Transverse colon (tissue), 4 donors: ENCODE measurements at regions of chr4 and their contacts with region 1.

Region 1: DNA sequence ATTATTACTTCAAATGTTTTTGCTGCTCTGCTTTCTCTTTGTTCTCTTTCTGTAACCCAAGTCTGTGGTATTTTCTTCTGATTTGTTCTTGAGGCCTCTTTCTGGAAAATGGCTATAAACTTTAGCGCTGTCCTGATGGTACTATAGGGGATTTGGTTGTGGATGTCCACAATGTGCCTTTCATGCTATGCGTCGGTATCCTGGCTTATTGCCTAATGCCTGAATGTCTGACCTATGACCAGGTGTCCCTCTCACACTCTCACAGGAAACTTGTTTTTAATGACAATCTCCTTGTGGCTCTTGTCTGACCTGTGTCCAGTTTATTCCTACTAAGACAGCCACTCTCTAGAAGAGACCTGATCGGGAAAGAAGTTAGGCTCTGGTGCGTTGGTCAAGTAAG is 222.4 kb upstream of the NR3C2 start:
- DNase-seq: no peak
- H3K4me3 ChIP-seq: no peak overlapping the region
- H3K27ac ChIP-seq: no peak overlapping the region
- H3K4me1 ChIP-seq: no peaks in the 10 kb centered on the region
- H3K27me3 ChIP-seq: no peaks in the 10 kb centered on the region
- CTCF ChIP-seq: no peak
- EP300 ChIP-seq: no peak
- POLR2A ChIP-seq: no peak

Region 2: GRCh38 chr4:146699910-146700309 is 1964.7 kb before region 1 on chr4:
- in situ Hi-C with region 1: no loop called
- intact Hi-C with region 1: loop called (anchors 5 kb)
- DNase-seq: no peak
- H3K4me3 ChIP-seq: no peak overlapping the region
- H3K27ac ChIP-seq: no peak overlapping the region
- H3K4me1 ChIP-seq: no peaks in the 10 kb centered on the region
- H3K27me3 ChIP-seq: no peaks in the 10 kb centered on the region
- CTCF ChIP-seq: no peak
- EP300 ChIP-seq: no peak
- POLR2A ChIP-seq: no peak